ENCODE measurements at regions of chr10 and their contacts with region 1.

Region 1: DNA sequence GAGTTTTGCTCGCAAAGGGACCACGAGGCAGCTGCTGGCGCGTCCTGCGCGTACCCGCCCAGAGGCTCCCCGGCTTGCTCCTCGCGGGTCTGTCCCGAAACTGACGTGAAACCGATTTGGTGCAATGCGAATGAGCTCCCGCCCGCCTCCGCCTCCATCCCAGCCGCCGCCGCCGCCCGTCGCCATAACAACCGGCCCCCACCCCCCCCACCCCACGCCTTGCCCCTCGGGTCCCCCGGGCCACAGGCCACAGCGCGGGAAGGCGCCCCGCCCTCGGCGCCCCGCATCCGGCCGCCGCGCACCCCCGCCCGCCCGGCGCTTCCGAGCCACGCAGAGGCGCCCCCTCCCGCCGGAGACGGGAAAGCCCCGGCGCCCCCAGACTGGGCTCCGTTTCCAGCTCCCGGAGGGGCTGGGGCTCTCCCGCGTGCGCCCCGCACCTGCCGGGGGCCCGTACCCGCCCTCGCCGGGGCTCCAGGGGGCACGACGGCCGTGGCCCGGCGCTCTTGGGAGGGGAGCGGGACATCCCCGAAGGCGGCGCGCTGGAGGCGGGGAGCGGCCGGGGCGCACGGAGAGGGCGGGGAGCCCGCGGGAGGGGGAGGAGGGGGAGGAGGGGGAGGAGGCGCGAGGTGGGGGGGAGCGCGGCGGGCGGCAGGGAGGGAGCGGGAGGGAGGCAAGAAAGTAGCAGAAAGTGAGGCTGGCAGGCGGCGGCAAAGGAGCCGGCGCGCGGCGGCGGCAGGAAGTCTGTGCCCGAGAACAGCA is at the start of gene CAMK1D:
- DNase-seq: peak; percentile 92
- ATAC-seq: peak; percentile 56
- H3K4me3 Mint-ChIP-seq: peak within 1 kb of the TSS; percentile 90
- H3K27ac Mint-ChIP-seq: peak within 1 kb of the TSS; percentile 95
- H3K4me1 Mint-ChIP-seq: peaks cover 42% of the 10 kb centered on the region
- H3K27me3 Mint-ChIP-seq: peaks cover 4% of the 10 kb centered on the region
- total RNA-seq, gene CAMK1D: 16.0 to 16.3 TPM

Region 2: GRCh38 chr10:12042797-12043651 is 306.0 kb before region 1 on chr10 and contains the start of gene UPF2:
- CTCF ChIA-PET with region 1: no interaction called
- POLR2A ChIA-PET with region 1: no interaction called
- intact Hi-C with region 1: loop called in 1 of 2 experiments (anchors 2 kb)
- DNase-seq: peak; percentile 99
- ATAC-seq: peak; percentile 90
- H3K4me3 Mint-ChIP-seq: peak within 1 kb of the TSS; percentile 99
- H3K27ac Mint-ChIP-seq: peak within 1 kb of the TSS; percentile 100
- H3K4me1 Mint-ChIP-seq: peaks cover 37% of the 10 kb centered on the region
- H3K27me3 Mint-ChIP-seq: peaks cover 2% of the 10 kb centered on the region
- total RNA-seq, gene UPF2: 34.2 to 46.8 TPM

Region 3: DNA sequence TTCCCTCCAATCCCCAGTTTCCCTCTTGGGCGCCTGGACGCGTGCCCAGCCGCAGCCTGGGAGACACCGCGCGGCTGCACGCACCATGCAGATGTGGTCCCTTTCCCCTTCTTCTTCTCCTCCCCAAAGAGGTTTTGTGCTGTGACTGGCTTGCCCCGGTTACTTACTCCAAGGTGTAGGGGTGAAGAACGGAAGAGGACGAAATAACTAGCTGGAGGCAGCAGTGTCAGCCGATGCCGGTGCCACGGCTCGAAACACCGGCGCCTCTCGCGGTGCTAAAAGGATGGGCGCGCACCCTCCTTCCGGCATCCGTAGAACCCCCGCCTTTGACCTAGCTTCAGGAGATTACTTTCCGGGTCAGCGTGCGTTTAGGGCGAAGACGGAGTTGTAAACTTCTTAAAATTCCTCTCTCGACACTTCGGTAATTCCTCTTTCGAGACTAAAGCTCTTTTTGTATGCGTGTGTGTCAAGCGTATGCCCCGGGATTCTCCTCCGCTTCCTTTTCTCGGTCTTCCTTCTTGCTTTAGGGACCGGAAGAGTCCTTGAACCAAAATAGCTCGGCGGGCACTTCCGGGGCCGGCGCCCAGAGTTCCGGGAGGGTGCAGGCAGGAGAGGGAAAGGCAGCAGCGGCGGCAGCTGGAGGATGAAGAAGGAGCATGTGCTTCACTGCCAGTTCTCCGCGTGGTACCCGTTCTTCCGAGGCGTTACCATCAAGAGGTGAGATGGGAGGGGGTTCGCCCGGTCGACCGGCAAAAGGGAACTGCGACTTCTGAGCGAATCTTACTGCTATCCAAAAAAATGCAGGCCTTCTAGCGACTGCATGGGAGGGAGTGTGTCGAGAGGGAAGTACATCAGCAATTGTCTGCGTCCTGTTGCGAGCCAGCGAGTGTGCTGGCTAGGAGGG is 153.2 kb before region 1 on chr10 and contains the starts of genes CDC123 and NUDT5:
- CTCF ChIA-PET with region 1: no interaction called
- POLR2A ChIA-PET with region 1: no interaction called
- intact Hi-C with region 1: loop called in 1 of 2 experiments (anchors 5 kb)
- DNase-seq: peak; percentile 94
- ATAC-seq: peak; percentile 94
- H3K4me3 Mint-ChIP-seq: peak within 1 kb of the TSS; percentile 96
- H3K27ac Mint-ChIP-seq: peak within 1 kb of the TSS; percentile 97
- H3K4me1 Mint-ChIP-seq: peaks cover 42% of the 10 kb centered on the region
- H3K27me3 Mint-ChIP-seq: no peaks in the 10 kb centered on the region
- total RNA-seq, gene CDC123: 129 to 151 TPM
- total RNA-seq, gene NUDT5: 99.9 to 108 TPM

Region 4: GRCh38 chr10:12369982-12370381 is 20.9 kb after region 1 on chr10:
- CTCF ChIA-PET with region 1: interaction called, 4 read pairs
- POLR2A ChIA-PET with region 1: interaction called, 4 read pairs
- intact Hi-C with region 1: loop called in 1 of 2 experiments (anchors 1 kb)
- DNase-seq: no peak
- ATAC-seq: no peak
- H3K4me3 Mint-ChIP-seq: no peak overlapping the region
- H3K27ac Mint-ChIP-seq: no peak overlapping the region
- H3K4me1 Mint-ChIP-seq: peaks cover 27% of the 10 kb centered on the region
- H3K27me3 Mint-ChIP-seq: no peaks in the 10 kb centered on the region

Region 5: DNA sequence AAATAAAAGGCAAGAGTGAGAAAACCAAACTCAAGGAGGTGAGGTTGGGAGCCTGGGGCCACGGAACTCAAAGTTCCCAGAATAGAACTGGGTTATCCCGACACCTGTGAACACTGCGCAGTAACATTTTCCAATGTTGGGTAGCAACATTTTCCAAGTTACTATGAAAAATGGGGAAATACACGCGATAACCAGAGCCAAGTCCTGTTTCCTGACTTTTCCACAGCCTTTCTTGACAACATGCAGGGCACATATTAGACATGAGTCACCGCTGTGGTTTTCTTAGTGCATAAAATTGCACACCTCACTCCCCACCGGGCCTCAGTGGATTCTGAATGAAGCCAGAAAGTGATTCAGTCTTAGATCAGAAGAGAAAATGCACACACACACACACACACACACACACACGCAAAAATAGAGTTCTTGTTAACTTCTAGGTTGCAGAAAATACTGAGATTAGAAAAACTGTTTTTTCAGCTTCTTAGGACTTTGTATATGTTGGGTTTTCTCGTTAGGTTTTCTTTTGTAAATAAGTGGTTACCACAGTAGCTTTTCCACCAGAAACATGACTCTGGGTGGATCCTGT is 70.3 kb after region 1 on chr10:
- CTCF ChIA-PET with region 1: interaction called, 3 read pairs
- POLR2A ChIA-PET with region 1: no interaction called
- intact Hi-C with region 1: loop called in 1 of 2 experiments (anchors 2 kb)
- DNase-seq: peak; percentile 88
- ATAC-seq: peak; percentile 98
- H3K4me3 Mint-ChIP-seq: peak overlapping the region; percentile 30
- H3K27ac Mint-ChIP-seq: peak overlapping the region; percentile 73
- H3K4me1 Mint-ChIP-seq: peaks cover 36% of the 10 kb centered on the region
- H3K27me3 Mint-ChIP-seq: no peaks in the 10 kb centered on the region

Region 6: DNA sequence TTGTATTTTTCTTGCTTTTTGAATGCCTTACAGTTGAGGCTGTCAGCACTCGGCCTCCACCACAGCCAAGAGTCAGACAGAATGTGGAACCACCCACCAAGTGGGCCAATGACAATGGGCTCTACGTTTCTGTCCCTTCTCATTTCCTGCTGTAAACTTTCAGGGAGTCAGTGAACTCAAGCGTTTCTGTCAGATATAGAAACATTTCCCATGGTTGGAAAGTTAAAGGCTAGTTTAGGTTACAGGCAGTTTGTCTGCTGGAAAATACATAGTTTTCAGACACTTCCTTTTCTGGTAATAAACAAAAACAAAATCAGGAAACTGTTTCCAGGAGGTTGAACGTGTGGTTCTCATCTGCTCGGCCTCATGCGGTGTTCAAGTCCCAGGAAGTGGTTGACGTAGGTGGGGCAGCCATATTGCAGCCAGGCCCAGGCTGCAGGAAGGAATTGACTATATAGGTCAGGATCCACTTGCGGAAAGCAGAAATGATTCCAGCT is 245.4 kb after region 1 on chr10:
- CTCF ChIA-PET with region 1: no interaction called
- POLR2A ChIA-PET with region 1: no interaction called
- intact Hi-C with region 1: loop called in 1 of 2 experiments (anchors 5 kb)
- DNase-seq: peak; percentile 66
- ATAC-seq: peak; percentile 74
- H3K4me3 Mint-ChIP-seq: peak overlapping the region; percentile 49
- H3K27ac Mint-ChIP-seq: peak overlapping the region; percentile 94
- H3K4me1 Mint-ChIP-seq: peaks cover 90% of the 10 kb centered on the region
- H3K27me3 Mint-ChIP-seq: no peaks in the 10 kb centered on the region

Region 7: GRCh38 chr10:12710594-12711349 is 361.7 kb after region 1 on chr10:
- CTCF ChIA-PET with region 1: interaction called, 3 read pairs
- POLR2A ChIA-PET with region 1: no interaction called
- intact Hi-C with region 1: loop called in 1 of 2 experiments (anchors 5 kb)
- DNase-seq: peak; percentile 92
- ATAC-seq: peak; percentile 81
- H3K4me3 Mint-ChIP-seq: no peak overlapping the region
- H3K27ac Mint-ChIP-seq: peak overlapping the region; percentile 91
- H3K4me1 Mint-ChIP-seq: peaks cover 70% of the 10 kb centered on the region
- H3K27me3 Mint-ChIP-seq: no peaks in the 10 kb centered on the region

Measured in activated CD4-positive, alpha-beta T cell treated with anti-CD3 and anti-CD28 coated beads for 36 hours (primary cell).